Activated CD4-positive, alpha-beta T cell treated with anti-CD3 and anti-CD28 coated beads, Interleukin-2, amount 10 ng/mL, durations not matched to agents 24 days and 14 days (primary cell): ENCODE measurements at regions of chr4 and their contacts with region 1.

Region 1: GRCh38 chr4:142405021-142405694 is 440.9 kb downstream of the INPP4B start:
- DNase-seq: peak; percentile 88
- H3K4me3 Mint-ChIP-seq: peak overlapping the region; percentile 95
- H3K27ac Mint-ChIP-seq: peak overlapping the region; percentile 100
- H3K4me1 Mint-ChIP-seq: peaks cover 57% of the 10 kb centered on the region
- H3K27me3 Mint-ChIP-seq: no peaks in the 10 kb centered on the region

Region 2: GRCh38 chr4:142307857-142308256 is 97.3 kb before region 1 on chr4:
- intact Hi-C with region 1: no loop called
- DNase-seq: peak; percentile 34
- H3K4me3 Mint-ChIP-seq: no peak overlapping the region
- H3K27ac Mint-ChIP-seq: no peak overlapping the region
- H3K4me1 Mint-ChIP-seq: peaks cover 4% of the 10 kb centered on the region
- H3K27me3 Mint-ChIP-seq: no peaks in the 10 kb centered on the region

Region 3: GRCh38 chr4:142353149-142353738 is 51.9 kb before region 1 on chr4:
- intact Hi-C with region 1: loop called (anchors 1 kb)
- DNase-seq: peak; percentile 73
- H3K4me3 Mint-ChIP-seq: peak overlapping the region; percentile 69
- H3K27ac Mint-ChIP-seq: peak overlapping the region; percentile 71
- H3K4me1 Mint-ChIP-seq: peaks cover 82% of the 10 kb centered on the region
- H3K27me3 Mint-ChIP-seq: no peaks in the 10 kb centered on the region

Region 4: GRCh38 chr4:142416711-142417275 is 11.6 kb after region 1 on chr4:
- intact Hi-C with region 1: loop called (anchors 1 kb)
- DNase-seq: peak; percentile 75
- H3K4me3 Mint-ChIP-seq: peak overlapping the region; percentile 62
- H3K27ac Mint-ChIP-seq: peak overlapping the region; percentile 95
- H3K4me1 Mint-ChIP-seq: peaks cover 36% of the 10 kb centered on the region
- H3K27me3 Mint-ChIP-seq: no peaks in the 10 kb centered on the region

Region 5: GRCh38 chr4:142713282-142714030 is 308.3 kb after region 1 on chr4:
- intact Hi-C with region 1: loop called (anchors 5 kb)
- DNase-seq: no peak
- H3K4me3 Mint-ChIP-seq: peak overlapping the region; percentile 44
- H3K27ac Mint-ChIP-seq: peak overlapping the region; percentile 57
- H3K4me1 Mint-ChIP-seq: peaks cover 41% of the 10 kb centered on the region
- H3K27me3 Mint-ChIP-seq: no peaks in the 10 kb centered on the region

Region 6: DNA sequence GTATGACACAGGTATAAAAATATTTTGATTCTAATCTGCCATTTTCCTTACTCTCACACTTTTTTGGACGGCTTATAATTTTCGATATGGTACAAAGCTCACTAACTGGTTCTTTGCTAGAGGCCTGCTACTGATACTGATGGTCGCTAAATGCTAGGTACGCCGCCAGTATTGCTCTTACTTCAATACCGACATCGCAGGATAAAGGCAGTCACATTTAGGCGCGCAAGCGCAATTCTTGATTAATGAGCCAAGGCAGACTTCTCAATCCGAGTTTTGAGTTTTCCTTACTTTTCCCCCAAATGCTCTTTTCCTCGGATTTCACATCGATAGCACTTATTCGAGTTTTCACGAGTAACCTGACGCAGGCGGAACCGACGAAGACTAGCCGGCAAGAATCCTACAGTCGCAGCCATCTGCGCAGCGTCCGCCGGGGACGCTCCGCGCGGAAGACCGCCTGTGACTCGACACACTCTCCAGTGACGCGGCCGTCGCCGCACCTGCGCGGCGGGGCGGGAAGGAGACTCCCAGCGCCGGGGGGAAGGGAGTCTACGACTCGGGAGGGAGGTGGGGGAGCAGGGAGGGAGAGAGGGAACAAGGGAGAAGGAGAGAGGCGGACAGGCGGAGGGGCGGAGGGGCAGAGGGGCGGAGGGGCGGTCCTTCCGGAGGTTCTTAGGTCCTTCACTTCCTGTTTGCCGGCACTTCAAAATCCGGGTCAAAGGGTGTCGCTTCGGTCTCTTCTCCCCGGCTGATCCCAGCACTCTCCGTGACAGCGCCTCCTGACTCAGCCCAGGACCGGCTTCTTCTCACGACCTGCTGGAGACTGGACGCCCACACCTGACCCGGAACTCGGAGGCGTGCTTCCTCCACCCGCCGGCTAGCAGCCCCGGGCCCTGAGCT is 779.3 kb after region 1 on chr4 and contains the start of gene USP38:
- intact Hi-C with region 1: loop called (anchors 10 kb)
- DNase-seq: peak; percentile 94
- H3K4me3 Mint-ChIP-seq: peak within 1 kb of the TSS; percentile 90
- H3K27ac Mint-ChIP-seq: peak within 1 kb of the TSS; percentile 95
- H3K4me1 Mint-ChIP-seq: peaks cover 39% of the 10 kb centered on the region
- H3K27me3 Mint-ChIP-seq: no peaks in the 10 kb centered on the region
- total RNA-seq, gene USP38: 28.5 and 28.7 TPM in 2 replicates